Left cardiac atrium (tissue), 4 donors: ENCODE measurements at regions of chr16 and their contacts with region 1.

Region 1: GRCh38 chr16:53968454-53968853 is 264.5 kb downstream of the FTO start:
- DNase-seq: no peak
- ATAC-seq: peak; percentile 77 to 78

Region 2: DNA sequence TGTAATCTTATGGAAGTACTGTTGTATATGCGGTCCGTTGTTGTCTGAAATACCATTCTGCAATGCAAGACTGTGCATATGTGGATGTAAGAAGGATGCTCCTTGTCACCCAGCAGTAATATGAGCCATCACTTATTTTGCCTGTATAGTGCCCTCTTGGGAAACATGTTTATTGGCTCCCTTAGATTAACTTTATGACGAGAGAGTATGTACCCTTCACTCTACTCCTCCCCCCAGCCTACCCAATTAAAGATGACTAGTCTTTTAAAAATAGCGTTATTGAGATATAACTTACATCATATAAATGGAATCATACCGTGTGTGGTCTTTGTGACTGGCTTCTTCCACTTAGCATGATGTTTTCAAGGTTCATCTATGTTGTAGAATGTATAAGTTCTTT is 230.9 kb before region 1 on chr16:
- intact Hi-C with region 1: no loop called
- DNase-seq: no peak
- ATAC-seq: no peak

Region 3: GRCh38 chr16:54236773-54237172 is 268.3 kb after region 1 on chr16:
- intact Hi-C with region 1: loop called in 1 of 2 experiments (anchors 10 kb)
- DNase-seq: no peak
- ATAC-seq: peak in 1 of 2 donors; percentile 18